Heart left ventricle (tissue), 16 donors: ENCODE measurements at regions of chr10 and their contacts with region 1.

Region 1: GRCh38 chr10:116241642-116242410 is 31.2 kb downstream of the GFRA1 start:
- DNase-seq: no peak
- ATAC-seq: no peak
- H3K4me3 ChIP-seq: no peak overlapping the region
- H3K27ac ChIP-seq: no peak overlapping the region
- H3K4me1 ChIP-seq: no peaks in the 10 kb centered on the region
- H3K27me3 ChIP-seq: no peaks in the 10 kb centered on the region
- CTCF ChIP-seq: no peak
- POLR2A ChIP-seq: no peak

Region 2: DNA sequence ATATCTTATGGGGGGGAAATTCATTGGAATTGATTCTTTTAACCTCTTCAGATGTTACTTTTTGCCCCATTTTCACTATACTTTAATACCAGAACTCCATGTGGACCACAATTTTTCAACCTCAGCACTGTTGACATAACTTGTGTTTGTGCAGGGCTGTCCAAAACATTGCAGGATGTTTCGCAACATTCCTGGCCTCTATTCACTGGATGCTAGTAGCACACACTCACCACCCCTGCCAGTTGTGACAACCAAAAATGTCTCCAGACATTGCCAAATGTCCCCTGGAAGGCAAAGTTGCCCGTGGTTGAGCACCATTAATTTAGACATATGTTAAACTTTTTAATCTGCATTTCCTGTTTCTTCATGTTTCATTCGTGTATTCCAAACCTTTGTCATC is 203.6 kb before region 1 on chr10:
- intact Hi-C with region 1: loop called in 1 of 10 experiments (anchors 5 kb)
- DNase-seq: peak in 2 of 5 donors; percentile 43 to 44
- ATAC-seq: peak; percentile 54 to 73 (median 63)
- H3K4me3 ChIP-seq: no peak overlapping the region
- H3K27ac ChIP-seq: no peak overlapping the region
- H3K4me1 ChIP-seq: no peaks in the 10 kb centered on the region
- H3K27me3 ChIP-seq: no peaks in the 10 kb centered on the region
- CTCF ChIP-seq: no peak
- POLR2A ChIP-seq: no peak